Right ventricle myocardium inferior (tissue), 1 donor: ENCODE measurements at regions of chr13 and their contacts with region 1.

Region 1: DNA sequence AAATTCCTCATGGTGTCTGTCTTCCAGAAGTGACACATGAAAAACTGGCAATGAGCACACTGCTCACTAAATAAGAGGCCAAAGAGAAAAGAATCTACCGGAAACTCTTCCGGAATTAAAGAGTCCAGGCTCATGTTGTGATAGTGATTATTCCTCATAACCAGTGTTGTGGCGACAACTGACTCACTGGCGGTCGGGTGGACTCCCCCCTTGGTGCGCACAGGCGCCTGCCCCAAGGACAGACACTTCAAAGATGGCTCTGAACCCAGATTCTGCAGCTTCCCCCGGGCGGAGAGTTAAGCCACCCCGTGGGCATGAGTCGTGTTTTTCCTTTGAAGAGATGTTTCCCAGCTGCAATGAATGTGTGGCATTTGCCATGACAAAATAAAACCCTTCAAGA is 10.3 kb downstream of the IL17D start:
- DNase-seq: no peak
- ATAC-seq: no peak

Region 2: DNA sequence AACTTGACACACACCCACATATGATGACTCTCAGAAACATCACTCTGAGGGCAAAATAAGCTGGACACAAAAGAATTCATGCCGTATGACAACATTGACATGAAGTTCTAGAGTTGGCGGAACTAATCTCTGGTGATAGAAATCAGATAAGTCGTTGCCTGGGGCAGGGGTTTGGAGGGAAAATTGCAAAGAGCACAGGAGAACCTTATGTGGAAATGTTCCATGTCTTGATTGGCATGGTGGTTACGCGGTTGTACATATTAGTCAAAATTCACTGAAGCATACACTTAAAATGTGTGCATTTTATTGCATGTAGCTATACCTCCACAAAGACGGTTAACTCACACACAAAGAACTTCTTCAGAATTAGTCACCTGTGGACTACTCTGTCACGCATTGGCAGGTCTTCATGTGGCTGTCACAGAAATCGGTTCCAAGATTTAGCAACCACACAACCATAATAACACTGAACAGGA is 343.8 kb before region 1 on chr13:
- intact Hi-C with region 1: no loop called
- DNase-seq: no peak
- ATAC-seq: no peak

Region 3: GRCh38 chr13:20495082-20496023 is 218.4 kb before region 1 on chr13:
- intact Hi-C with region 1: loop called (anchors 10 kb)
- DNase-seq: no peak
- ATAC-seq: peak; percentile 87

Region 4: GRCh38 chr13:20525690-20526544 is 187.8 kb before region 1 on chr13 and contains the start of gene CRYL1:
- intact Hi-C with region 1: no loop called
- DNase-seq: peak; percentile 92
- ATAC-seq: peak; percentile 97
- total RNA-seq, gene CRYL1: 19.8 TPM

Region 5: DNA sequence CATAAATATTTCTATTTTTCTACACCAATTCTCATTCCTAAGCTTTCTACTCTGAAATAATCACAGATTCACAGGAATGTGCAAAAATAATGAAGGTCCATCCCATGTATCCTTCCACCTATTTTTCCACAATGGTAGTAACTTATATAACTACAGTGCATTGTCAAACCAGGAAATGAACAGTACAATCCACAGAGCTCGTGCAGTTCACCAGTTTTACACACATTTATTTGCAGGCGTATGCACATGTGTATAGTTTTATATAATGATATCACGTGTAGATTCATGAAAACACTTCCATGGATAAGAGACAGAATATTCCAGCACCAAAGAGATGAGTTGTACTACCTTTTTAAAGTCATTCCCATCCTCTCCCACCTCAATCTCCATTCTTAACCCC is 47.1 kb after region 1 on chr13:
- intact Hi-C with region 1: no loop called
- DNase-seq: no peak
- ATAC-seq: no peak

Region 6: DNA sequence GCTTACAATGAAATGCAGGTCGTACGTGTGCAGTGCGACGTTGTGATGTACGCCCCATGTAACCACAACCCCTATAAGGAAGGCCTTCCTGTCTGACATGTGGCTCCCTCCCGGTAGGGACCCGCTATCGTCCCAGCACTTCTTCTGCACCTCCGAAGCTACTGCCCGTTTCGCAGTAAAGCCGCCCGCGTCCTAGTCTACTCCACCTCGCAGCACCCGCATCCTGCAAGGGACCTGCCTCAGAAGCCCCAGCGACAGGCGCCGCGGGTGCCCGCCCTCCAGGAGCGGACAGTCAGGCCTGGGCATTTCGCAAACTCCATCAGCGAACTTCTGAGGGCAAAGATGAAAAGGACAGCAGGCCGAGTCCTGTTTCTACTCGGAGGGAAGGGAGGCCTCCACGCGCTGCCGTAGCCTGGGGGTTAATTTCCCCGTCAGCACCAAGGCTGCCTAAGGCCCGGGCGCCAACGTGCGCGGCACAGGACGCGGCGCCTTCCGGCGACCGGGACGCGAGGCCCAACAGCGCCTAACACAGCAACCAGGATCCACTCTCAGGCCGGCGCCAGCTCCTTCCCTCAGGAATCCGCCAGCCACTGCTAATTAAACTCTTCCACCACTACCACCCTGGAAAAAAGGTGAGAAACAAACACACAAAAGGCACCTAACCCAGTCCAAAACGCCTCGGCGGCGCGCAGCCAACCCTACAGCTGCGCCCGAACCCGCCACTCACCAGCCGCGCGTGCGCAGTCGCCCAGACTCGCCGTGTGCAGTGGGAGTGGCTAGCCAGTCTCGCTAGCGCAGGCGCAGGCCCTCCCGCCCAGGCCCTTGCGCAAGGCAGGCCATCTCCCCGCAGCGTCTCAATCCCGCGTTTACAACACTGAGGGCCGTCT is 59.7 kb after region 1 on chr13 and contains the start of gene EEF1AKMT1:
- intact Hi-C with region 1: loop called (anchors 5 kb)
- DNase-seq: peak; percentile 98
- ATAC-seq: peak; percentile 99
- total RNA-seq, gene EEF1AKMT1: 9.3 TPM

Region 7: GRCh38 chr13:20828539-20829364 is 115.0 kb after region 1 on chr13:
- intact Hi-C with region 1: loop called (anchors 2 kb)
- DNase-seq: no peak
- ATAC-seq: no peak

Region 8: DNA sequence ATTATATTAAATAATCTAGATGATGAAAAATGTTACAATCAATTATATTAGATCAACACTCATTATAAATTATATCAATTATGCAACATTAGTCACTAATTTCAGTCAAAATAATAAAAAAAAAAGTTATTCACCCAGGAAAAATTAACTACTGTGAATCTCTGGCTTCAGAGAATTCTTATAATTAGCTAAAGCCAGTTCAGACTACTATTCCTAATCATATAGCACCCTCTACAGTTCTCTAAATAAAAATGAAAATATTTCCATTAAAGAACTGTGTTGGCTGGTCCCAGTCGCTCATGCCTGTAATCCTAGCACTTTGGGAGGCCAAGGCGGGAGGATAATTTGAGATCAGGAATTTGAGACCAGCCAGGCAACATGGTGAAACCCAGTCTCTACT is 155.8 kb after region 1 on chr13:
- intact Hi-C with region 1: loop called (anchors 2 kb)
- DNase-seq: no peak
- ATAC-seq: no peak

Region 9: GRCh38 chr13:20902438-20903163 is 188.8 kb after region 1 on chr13 and contains the start of gene XPO4:
- intact Hi-C with region 1: loop called (anchors 10 kb)
- DNase-seq: peak; percentile 90
- ATAC-seq: peak; percentile 97
- total RNA-seq, gene XPO4: 30.7 TPM

Region 10: DNA sequence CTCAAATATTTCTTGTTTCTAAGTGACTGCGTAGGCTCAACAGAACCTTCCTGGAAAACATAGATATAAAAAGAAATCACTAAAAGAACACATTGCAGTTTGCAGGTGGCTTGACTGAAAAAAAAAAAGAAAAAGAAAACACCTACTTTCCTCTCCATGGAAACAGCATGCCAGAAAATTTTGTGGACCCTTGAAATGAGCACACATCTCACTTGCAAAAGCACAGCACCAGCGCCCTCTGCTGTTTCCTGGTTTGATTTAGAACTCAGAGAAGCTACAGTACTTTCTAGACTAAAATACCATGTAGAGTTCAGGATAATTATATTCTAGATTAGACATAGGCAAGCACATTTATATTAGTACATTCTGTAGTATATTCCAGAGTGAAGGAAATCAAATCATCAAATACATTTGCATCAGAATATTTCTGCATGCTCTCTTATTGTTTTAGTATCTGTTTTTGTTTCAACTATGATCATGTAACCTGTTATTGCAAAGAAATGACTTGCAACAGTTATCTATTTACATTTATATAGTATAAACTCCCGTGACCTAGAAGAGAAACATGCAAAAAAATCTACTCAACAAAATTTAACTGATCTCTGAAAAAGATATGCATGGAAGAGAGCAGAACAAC is 211.1 kb after region 1 on chr13:
- intact Hi-C with region 1: loop called (anchors 5 kb)
- DNase-seq: peak; percentile 77
- ATAC-seq: no peak

Region 11: DNA sequence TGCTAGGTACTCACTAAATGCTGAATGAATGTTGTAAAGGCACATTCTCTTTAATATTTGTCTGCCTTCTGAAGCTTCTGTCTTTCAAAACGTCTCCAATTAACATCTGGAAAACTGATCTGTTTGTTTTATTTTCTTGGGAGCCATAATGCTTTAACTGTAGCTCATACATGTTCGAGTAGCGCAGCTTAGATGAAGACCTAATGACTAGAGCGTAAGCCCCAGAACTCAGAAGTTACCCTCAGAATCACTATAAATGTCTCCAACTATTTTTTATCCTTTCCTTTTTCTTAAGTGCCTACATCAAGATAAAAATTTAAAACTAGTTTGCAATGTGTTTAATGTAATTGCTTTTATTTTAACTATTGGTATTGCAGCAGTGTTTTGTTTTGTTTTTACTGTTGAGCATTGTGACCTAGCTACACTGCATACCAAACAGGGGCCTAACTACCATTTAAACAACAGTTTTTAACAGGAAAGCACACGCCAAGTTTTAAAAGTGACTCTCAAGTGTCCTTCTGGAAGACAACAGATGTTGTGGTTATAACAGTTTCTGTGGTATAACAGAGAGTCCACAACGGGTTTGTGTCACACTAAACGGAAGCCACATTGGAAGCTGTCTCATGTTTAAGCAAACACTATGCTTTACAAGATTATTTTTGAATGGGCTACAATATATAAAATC is 504.7 kb after region 1 on chr13:
- intact Hi-C with region 1: no loop called
- DNase-seq: no peak
- ATAC-seq: no peak